ENCODE measurements at regions of chr5 and their contacts with region 1.

Region 1: DNA sequence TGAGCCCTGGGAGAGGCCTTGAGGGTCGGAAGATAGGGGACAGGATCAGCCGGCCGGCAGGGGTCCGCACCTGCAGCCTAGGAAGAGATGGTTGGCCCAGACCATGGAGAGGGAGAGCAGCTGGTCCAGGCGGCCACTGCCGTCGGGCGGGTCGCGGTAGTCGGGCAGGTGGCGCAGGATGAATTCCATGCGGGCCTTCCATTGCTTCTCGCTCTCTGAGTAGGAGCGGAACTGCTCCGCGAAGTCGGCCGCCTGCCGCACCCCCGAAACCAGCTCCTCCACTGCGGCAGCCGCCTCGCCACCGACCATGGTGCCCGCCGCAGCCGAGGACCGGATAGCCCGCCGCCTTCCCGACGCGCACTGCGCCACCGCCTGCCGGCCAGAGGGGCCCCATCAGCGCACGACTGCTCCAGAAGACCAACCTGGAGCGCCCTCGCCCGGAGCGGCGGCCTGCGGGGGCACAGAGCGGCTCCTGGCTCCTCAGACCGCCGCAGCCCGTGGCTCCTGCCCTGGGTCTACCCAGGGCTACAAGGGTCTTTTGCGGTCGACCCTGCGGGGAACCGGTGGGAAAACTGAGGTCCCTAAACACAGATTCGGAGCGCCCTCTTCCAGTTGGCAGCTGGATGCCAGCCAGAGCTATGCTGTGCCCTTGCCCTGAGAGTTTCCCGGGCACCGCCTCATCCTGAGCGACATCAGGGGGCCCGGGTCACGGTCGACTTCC is at the start of gene CDKN2AIPNL:
- DNase-seq: peak; percentile 83 to 93 (median 89)
- ATAC-seq: peak; percentile 100
- H3K4me3 ChIP-seq: peak within 1 kb of the TSS; percentile 82
- H3K4me3 Mint-ChIP-seq: peak within 1 kb of the TSS; percentile 86 to 96 (median 92)
- H3K27ac ChIP-seq: peak within 1 kb of the TSS; percentile 82
- H3K27ac Mint-ChIP-seq: peak within 1 kb of the TSS; percentile 63 to 93 (median 90)
- H3K4me1 ChIP-seq: peaks cover 16 to 23% of the 10 kb centered on the region in 2 donors
- H3K4me1 Mint-ChIP-seq: peaks cover 20 to 54% (median 38%) of the 10 kb centered on the region in 7 donors
- H3K27me3 ChIP-seq: no peaks in the 10 kb centered on the region
- H3K27me3 Mint-ChIP-seq: no peaks in the 10 kb centered on the region
- total RNA-seq, gene CDKN2AIPNL: 11.5 to 20.8 (median 16.8) TPM

Region 2: GRCh38 chr5:134380346-134380745 is 31.4 kb before region 1 on chr5:
- CTCF ChIA-PET with region 1: no interaction called
- POLR2A ChIA-PET with region 1: interaction called, 10 read pairs
- intact Hi-C with region 1: no loop called
- DNase-seq: peak in 7 of 9 donors; percentile 16 to 70 (median 47)
- ATAC-seq: peak; percentile 66
- H3K4me3 ChIP-seq: no peak overlapping the region
- H3K4me3 Mint-ChIP-seq: peak overlapping the region in 9 of 10 donors; percentile 26 to 82 (median 57)
- H3K27ac ChIP-seq: peak overlapping the region; percentile 47
- H3K27ac Mint-ChIP-seq: peak overlapping the region in 8 of 9 donors; percentile 0 to 91 (median 79)
- H3K4me1 ChIP-seq: peaks cover 0 to 8% of the 10 kb centered on the region in 2 donors
- H3K4me1 Mint-ChIP-seq: peaks cover 28 to 66% (median 48%) of the 10 kb centered on the region in 7 donors
- H3K27me3 ChIP-seq: no peaks in the 10 kb centered on the region
- H3K27me3 Mint-ChIP-seq: no peaks in the 10 kb centered on the region

Region 3: GRCh38 chr5:134436523-134437339 is 25.0 kb after region 1 on chr5:
- CTCF ChIA-PET with region 1: interaction called, 3 read pairs
- POLR2A ChIA-PET with region 1: interaction called, 9 read pairs
- intact Hi-C with region 1: loop called in 1 of 2 experiments (anchors 1 kb)
- DNase-seq: peak; percentile 29 to 65 (median 50)
- ATAC-seq: peak; percentile 92
- H3K4me3 ChIP-seq: peak overlapping the region; percentile 24
- H3K4me3 Mint-ChIP-seq: peak overlapping the region in 9 of 10 donors; percentile 20 to 65 (median 51)
- H3K27ac ChIP-seq: no peak overlapping the region
- H3K27ac Mint-ChIP-seq: peak overlapping the region; percentile 47 to 85 (median 74)
- H3K4me1 ChIP-seq: peaks cover 0 to 11% of the 10 kb centered on the region in 2 donors
- H3K4me1 Mint-ChIP-seq: peaks cover 0 to 31% (median 14%) of the 10 kb centered on the region in 7 donors
- H3K27me3 ChIP-seq: no peaks in the 10 kb centered on the region
- H3K27me3 Mint-ChIP-seq: no peaks in the 10 kb centered on the region

Region 4: DNA sequence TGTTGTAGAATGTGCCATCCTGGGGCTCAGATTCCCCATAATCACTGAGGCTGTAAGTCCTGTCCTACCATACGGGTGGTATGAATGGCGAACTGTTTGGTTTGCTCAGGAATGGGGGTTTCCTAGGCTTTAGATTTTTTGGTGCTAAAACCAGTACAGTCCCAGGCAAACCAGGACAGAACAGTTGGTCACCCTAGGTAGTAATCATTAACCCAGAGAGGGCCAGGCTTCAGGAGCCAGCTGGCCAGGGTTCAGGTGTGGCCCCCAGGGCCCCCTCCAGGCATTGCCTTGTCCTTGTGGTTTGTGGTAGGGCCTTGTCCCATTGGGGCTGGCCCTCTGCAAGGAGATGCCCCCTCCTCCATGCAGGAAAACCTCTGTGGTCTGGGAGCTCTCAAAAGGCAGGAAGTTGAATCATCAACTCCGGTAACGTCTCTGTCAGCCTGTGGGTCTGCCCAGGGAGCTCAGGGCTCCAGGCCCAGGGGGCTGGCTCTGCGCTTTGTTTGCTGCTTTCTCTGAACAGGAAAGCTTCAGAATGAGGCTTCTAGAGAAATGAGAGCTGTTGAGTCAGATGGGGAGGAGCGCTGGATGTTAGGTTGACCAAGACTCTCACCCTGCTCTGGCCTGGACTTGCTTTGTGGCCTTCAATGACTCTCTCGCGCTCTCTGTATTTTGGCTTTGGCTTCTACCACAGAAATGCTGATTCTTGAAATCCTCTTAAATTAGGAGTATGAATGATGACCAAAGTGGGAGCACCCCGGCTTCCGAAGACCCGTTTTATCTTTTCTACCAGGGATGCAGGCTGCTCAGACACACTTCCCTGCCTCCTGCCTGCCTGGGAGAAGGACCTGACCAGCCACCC is 91.6 kb after region 1 on chr5:
- CTCF ChIA-PET with region 1: interaction called, 6 read pairs
- POLR2A ChIA-PET with region 1: no interaction called
- intact Hi-C with region 1: loop called in 1 of 2 experiments (anchors 1 kb)
- DNase-seq: peak in 7 of 9 donors; percentile 15 to 73 (median 30)
- ATAC-seq: peak; percentile 77
- H3K4me3 ChIP-seq: no peak overlapping the region
- H3K4me3 Mint-ChIP-seq: peak overlapping the region in 9 of 10 donors; percentile 19 to 79 (median 48)
- H3K27ac ChIP-seq: peak overlapping the region; percentile 44
- H3K27ac Mint-ChIP-seq: peak overlapping the region; percentile 55 to 98 (median 86)
- H3K4me1 ChIP-seq: peaks cover 16 to 21% of the 10 kb centered on the region in 2 donors
- H3K4me1 Mint-ChIP-seq: peaks cover 11 to 43% (median 14%) of the 10 kb centered on the region in 7 donors
- H3K27me3 ChIP-seq: no peaks in the 10 kb centered on the region
- H3K27me3 Mint-ChIP-seq: no peaks in the 10 kb centered on the region

Region 5: DNA sequence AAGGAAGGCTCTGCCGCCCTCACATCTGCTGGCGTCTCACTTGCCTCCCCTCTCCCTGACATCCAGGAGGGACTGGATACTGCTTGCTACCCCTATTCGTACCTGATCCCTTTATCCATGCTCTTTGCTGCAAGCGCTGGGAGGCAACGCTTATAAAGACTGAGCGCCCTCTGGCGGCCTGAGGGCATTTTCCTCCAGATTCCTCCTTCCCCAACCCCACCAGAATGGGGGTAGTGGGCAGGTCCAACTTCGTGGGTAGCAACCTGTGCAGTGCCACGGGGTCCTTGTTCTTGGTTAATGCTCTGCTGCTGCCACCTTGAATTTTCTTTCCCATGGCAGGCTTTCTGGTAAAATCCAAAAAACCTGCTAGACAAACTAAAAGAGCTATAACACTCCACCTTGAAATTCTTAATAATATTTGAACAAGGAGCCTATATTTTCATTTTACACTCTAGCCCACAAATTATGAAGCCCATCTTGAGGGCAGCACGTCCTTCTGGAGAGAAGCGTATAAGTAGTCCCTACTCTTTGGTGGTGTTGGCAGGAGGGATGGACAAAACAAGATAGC is 166.2 kb after region 1 on chr5:
- CTCF ChIA-PET with region 1: interaction called, 3 read pairs
- POLR2A ChIA-PET with region 1: interaction called, 4 read pairs
- intact Hi-C with region 1: loop called (anchors 1 to 2 kb)
- DNase-seq: peak; percentile 56 to 77 (median 69)
- ATAC-seq: peak; percentile 80
- H3K4me3 ChIP-seq: no peak overlapping the region
- H3K4me3 Mint-ChIP-seq: no peak overlapping the region
- H3K27ac ChIP-seq: peak overlapping the region; percentile 44
- H3K27ac Mint-ChIP-seq: peak overlapping the region in 8 of 9 donors; percentile 2 to 78 (median 63)
- H3K4me1 ChIP-seq: no peaks in the 10 kb centered on the region
- H3K4me1 Mint-ChIP-seq: peaks cover 0 to 25% (median 13%) of the 10 kb centered on the region in 7 donors
- H3K27me3 ChIP-seq: no peaks in the 10 kb centered on the region
- H3K27me3 Mint-ChIP-seq: no peaks in the 10 kb centered on the region

Region 6: GRCh38 chr5:134648425-134649162 is 236.9 kb after region 1 on chr5 and contains the start of gene SEC24A:
- CTCF ChIA-PET with region 1: no interaction called
- POLR2A ChIA-PET with region 1: no interaction called
- intact Hi-C with region 1: loop called in 1 of 2 experiments (anchors 1 kb)
- DNase-seq: peak; percentile 83 to 93 (median 86)
- ATAC-seq: peak; percentile 92
- H3K4me3 ChIP-seq: peak within 1 kb of the TSS; percentile 76
- H3K4me3 Mint-ChIP-seq: peak within 1 kb of the TSS; percentile 89 to 100 (median 98)
- H3K27ac ChIP-seq: peak within 1 kb of the TSS; percentile 91
- H3K27ac Mint-ChIP-seq: peak within 1 kb of the TSS; percentile 94 to 100 (median 99)
- H3K4me1 ChIP-seq: peaks cover 7 to 9% of the 10 kb centered on the region in 2 donors
- H3K4me1 Mint-ChIP-seq: peaks cover 13 to 40% (median 26%) of the 10 kb centered on the region in 7 donors
- H3K27me3 ChIP-seq: no peaks in the 10 kb centered on the region
- H3K27me3 Mint-ChIP-seq: no peaks in the 10 kb centered on the region
- total RNA-seq, gene SEC24A: 13.6 to 30.9 (median 16.0) TPM

Measured in naive thymus-derived CD4-positive, alpha-beta T cell (primary cell).